Pancreas (tissue), 10 donors: ENCODE measurements at regions of chr9 and their contacts with region 1.

Region 1: DNA sequence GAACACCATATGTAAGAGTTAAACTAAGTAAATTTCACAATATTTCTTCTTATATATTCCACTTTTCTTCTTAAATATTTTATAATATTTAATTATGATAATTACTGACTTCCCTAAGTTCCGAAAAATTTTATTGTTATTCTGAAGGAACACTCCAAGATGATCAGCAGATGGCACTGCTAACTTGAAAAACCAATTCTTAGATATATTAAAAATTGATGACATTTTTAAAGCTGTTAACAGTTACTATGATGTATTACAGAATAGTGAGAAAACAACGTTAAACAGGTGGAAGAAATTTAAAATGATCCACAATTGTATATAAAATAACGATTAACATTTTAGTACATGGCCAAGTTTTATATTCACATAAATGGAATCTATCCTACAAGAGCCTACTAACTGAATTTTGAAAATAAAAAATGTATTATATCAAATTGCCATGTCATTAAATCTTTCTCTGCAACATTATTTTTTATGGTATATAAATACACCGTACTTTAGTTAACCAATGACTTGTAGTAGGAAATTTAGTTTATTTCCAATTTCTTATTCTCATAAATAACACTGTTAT is 30.1 kb upstream of the MUSK start:
- DNase-seq: no peak
- ATAC-seq: no peak
- H3K4me3 ChIP-seq: no peak overlapping the region
- H3K27ac ChIP-seq: no peak overlapping the region
- H3K4me1 ChIP-seq: no peaks in the 10 kb centered on the region
- H3K27me3 ChIP-seq: no peaks in the 10 kb centered on the region
- CTCF ChIP-seq: peak in 1 of 4 donors; percentile 12

Region 2: GRCh38 chr9:111298731-111299598 is 660.5 kb after region 1 on chr9:
- intact Hi-C with region 1: loop called in 2 of 3 experiments (anchors 5 to 10 kb)
- DNase-seq: no peak
- ATAC-seq: peak; percentile 70 to 96 (median 88)
- H3K4me3 ChIP-seq: no peak overlapping the region
- H3K27ac ChIP-seq: no peak overlapping the region
- H3K4me1 ChIP-seq: peaks cover 0 to 9% (median 0%) of the 10 kb centered on the region in 3 donors
- H3K27me3 ChIP-seq: no peaks in the 10 kb centered on the region
- CTCF ChIP-seq: peak; percentile 59 to 82 (median 68)